Right lobe of liver (tissue), 6 donors: ENCODE measurements at regions of chr16 and their contacts with region 1.

Region 1: GRCh38 chr16:56950881-56951771 is 10.6 kb upstream of the CETP start:
- DNase-seq: peak in 1 of 3 donors; percentile 61
- ATAC-seq: peak; percentile 65 to 84 (median 73)
- H3K4me3 ChIP-seq: no peak overlapping the region
- H3K27ac ChIP-seq: no peak overlapping the region
- H3K4me1 ChIP-seq: no peaks in the 10 kb centered on the region
- H3K27me3 ChIP-seq: no peaks in the 10 kb centered on the region
- CTCF ChIP-seq: peak; percentile 46 to 58 (median 54)
- POLR2A ChIP-seq: no peak

Region 2: DNA sequence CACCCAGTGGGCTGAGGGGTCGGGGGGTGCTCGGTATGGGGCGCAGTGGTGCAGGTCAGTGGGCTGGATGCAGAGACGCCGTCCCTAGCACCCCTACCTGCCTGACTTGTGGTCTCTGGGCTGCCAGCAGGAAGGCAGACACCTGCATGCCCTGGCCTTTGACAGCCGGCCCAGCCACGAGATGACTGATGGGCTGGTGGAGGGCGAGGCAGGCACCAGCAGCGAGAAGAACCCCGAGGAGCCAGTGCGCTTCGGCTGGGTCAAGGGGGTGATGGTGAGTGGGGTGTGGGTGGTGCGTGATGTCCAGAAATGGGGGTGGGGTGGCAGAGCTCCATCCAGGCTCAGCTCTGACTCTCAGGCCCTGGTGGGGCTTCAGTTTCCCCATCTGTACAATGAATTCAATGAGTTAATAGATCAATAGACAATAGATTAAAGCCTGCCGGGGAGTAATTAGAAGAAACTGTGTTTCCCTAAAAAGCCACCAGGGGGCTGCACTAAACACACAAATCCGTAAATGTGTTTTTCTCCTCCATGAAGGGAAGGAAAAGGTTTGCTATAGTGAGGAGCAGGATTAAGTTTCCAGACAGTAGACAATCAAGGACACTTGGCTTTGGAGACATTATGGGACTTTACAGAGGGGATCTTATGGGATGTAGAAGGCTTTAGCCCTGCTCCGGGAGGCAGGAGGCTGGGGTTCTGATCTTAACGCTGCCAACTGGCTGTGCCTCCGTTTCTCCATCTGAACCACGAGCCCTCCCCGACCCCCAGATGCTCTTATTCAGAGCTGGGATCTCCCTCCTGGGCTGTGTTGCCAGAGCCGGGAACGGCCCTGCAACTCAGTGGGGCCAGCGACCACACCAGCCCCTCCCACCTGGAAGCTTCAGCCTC is 83.9 kb before region 1 on chr16:
- intact Hi-C with region 1: loop called (anchors 5 to 10 kb)
- DNase-seq: no peak
- ATAC-seq: peak; percentile 50 to 71 (median 65)
- H3K4me3 ChIP-seq: no peak overlapping the region
- H3K27ac ChIP-seq: no peak overlapping the region
- H3K4me1 ChIP-seq: no peaks in the 10 kb centered on the region
- H3K27me3 ChIP-seq: no peaks in the 10 kb centered on the region
- CTCF ChIP-seq: peak; percentile 69 to 84 (median 76)
- POLR2A ChIP-seq: no peak